AG04449 (cell line): ENCODE measurements at regions of chr21 and their contacts with region 1.

Region 1: GRCh38 chr21:42117229-42117966 is 46.3 kb downstream of the UMODL1 start:
- DNase-seq: no peak
- H3K4me3 ChIP-seq: peak overlapping the region; percentile 32; the same call in 1 of the 2 replicates
- CTCF ChIP-seq: peak; percentile 83

Region 2: DNA sequence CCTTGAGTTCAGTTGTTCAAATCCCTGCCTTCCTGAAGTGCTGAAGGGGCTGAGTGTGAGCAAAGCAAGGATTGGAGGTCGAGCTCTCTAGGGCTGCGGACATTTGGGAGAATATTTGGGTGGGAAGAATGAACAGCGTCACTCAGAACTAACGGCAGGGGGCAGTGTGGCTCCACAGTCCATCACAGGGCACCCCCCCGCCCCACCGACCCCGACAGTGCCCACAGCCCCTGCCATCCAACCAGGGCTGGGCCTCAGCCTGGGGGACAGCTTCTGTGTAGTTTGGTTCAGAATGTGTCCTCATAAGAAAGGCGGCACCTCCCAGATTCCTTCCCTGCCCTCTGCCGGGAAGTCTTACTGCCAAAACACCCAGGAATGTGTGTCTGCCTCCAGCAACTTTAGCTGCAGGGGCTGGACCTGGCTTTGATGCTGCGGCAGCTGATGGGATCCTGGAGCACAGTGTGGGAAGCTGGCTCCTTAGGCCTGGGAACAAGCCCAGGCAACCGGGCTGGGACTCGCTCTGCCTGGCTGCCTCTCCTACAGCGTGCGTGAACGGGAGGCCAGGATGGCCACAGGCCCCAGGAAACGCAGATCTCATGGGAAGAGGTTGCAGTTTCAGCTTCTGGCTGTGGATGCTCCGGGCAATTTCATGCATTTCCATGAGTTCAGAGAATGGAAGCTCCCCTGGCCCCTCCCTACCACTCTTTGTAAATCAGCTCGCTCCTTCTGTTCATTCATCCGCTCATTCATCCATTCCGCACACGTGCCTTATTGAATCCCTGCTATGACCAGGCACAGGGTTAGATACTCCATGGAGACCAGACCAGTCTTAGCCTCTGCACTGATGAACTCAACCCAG is 504.5 kb before region 1 on chr21:
- CTCF ChIA-PET with region 1: interaction called, 15 read pairs
- POLR2A ChIA-PET with region 1: interaction called, 3 read pairs
- DNase-seq: peak; percentile 97
- H3K4me3 ChIP-seq: no peak overlapping the region
- CTCF ChIP-seq: peak; percentile 76

Region 3: DNA sequence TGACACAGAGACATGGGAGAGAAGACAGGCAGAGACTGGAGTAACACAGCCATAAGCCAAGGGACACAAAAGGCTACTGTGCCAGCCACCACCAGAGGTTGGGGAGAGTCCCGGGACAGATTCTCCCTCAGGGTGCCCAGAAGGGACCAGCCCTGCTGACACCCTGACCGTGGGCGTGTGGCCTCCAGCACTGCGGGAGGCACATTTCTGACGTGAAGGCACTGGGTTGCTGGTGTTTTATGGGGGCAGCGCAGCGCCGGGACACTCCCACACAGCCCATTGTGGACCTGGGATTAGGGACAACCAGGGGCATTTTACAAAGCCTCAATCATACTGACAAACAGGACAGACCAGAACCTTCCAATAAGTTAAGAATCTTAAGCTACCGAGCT is 264.5 kb before region 1 on chr21:
- CTCF ChIA-PET with region 1: no interaction called
- POLR2A ChIA-PET with region 1: no interaction called
- DNase-seq: no peak
- H3K4me3 ChIP-seq: no peak overlapping the region
- CTCF ChIP-seq: no peak

Region 4: DNA sequence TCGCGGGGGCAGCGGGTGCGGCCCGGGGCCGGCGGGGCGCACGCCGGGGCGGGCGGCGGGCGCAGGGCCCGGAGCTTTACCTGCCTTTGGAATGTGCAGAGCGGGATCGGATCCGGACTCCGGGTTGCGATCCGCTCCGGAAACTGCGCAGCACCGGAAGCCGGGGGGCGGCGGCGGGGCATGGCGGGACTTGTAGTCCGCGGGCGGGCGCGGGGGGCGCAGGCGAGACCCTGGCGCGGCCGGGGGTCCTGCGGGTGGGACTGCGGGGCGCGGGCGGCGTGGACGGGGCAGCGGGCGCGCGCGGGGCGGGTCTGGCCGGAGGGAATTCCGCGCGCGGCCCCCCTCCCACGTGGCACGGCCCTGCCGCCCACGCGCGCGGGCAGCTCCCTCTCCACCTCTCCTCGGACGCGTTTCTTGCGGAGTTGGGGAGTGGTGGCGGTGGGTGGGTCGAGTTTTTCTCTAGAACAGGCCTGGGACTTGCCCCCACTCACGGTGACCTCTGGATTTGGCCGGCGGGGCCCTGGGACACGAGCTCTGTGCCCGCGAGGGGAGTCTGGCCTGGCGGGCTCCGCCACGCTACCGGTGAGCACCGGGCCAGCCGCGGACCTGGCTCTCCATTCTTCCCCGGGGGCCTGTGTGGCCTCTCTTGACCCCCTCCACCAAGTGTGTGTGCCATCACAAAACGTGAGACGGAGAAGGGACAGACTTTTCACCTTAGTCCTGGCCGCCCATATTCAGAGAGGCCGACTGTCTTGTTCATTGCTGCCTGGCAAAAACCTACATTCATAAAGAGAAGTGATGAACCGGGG is 238.0 kb before region 1 on chr21 and contains the start of gene PRDM15:
- CTCF ChIA-PET with region 1: interaction called, 15 read pairs
- POLR2A ChIA-PET with region 1: no interaction called
- DNase-seq: peak; percentile 44
- H3K4me3 ChIP-seq: peak within 1 kb of the TSS; percentile 78
- CTCF ChIP-seq: no peak

Region 5: GRCh38 chr21:41913231-41913630 is 204.2 kb before region 1 on chr21:
- CTCF ChIA-PET with region 1: interaction called, 17 read pairs
- POLR2A ChIA-PET with region 1: no interaction called
- DNase-seq: no peak
- H3K4me3 ChIP-seq: no peak overlapping the region
- CTCF ChIP-seq: no peak

Region 6: GRCh38 chr21:41961282-41961701 is 156.1 kb before region 1 on chr21:
- CTCF ChIA-PET with region 1: interaction called, 10 read pairs
- POLR2A ChIA-PET with region 1: no interaction called
- DNase-seq: no peak
- H3K4me3 ChIP-seq: no peak overlapping the region
- CTCF ChIP-seq: no peak

Region 7: GRCh38 chr21:42097860-42098454 is 19.4 kb before region 1 on chr21:
- CTCF ChIA-PET with region 1: interaction called, 20 read pairs
- POLR2A ChIA-PET with region 1: interaction called, 3 read pairs
- DNase-seq: peak; percentile 96
- H3K4me3 ChIP-seq: no peak overlapping the region
- CTCF ChIP-seq: no peak

Region 8: GRCh38 chr21:42156690-42157577 is 39.5 kb after region 1 on chr21:
- CTCF ChIA-PET with region 1: no interaction called
- POLR2A ChIA-PET with region 1: no interaction called
- DNase-seq: no peak
- H3K4me3 ChIP-seq: no peak overlapping the region
- CTCF ChIP-seq: no peak

Region 9: GRCh38 chr21:42258153-42258884 is 140.9 kb after region 1 on chr21:
- CTCF ChIA-PET with region 1: no interaction called
- POLR2A ChIA-PET with region 1: no interaction called
- DNase-seq: no peak
- H3K4me3 ChIP-seq: no peak overlapping the region
- CTCF ChIP-seq: peak; percentile 81